Mammary epithelial cell (primary cell): ENCODE measurements at regions of chr2 and their contacts with region 1.

Region 1: DNA sequence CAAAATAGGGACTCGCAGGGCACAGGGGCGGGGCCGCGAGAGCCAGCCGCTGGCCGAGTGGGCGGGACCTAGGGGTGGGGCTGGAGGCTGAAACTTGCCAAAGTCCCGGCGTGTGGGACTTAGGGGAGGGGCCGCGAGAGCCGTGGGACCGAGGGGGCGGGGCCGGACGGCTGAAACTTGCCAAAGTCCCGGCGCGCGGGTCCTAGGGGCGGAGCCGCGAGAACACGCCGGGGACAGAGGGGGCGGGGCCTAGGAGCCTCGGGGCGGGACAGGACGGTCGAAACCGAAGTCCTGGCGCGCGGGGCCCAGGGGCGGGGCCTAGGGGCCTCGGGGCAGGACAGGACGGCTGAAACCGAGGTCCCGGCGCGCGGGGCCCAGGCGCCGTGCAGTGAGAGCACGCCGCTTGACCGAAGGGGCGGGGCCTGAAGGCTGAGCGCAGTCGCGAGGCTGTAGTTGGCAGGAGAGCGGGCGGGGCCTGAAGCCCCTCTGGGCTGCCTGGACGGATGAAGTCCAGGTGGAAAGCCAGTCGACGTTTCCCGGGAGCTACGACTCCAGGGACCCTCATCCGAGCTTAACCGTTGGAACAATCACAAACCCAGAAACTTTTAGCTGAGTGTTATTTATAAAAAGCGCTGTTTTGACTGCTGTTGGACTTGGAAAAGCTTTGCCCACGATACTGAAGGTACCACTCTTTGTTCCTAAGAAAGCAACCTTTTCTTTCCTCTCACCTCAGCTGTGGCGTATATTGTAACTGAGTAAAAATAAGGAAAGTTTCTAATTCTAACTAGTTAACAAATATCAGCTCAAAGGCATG is 475 bp upstream of the BARD1 start:
- DNase-seq: peak; percentile 98
- H3K4me3 ChIP-seq: peak overlapping the region; percentile 81 to 99 (median 92)
- H3K27ac ChIP-seq: peak overlapping the region; percentile 87
- H3K4me1 ChIP-seq: peaks cover 24% of the 10 kb centered on the region
- H3K27me3 ChIP-seq: no peaks in the 10 kb centered on the region
- CTCF ChIP-seq: no peak

Region 2: GRCh38 chr2:214543386-214543965 is 266.5 kb before region 1 on chr2:
- CTCF ChIA-PET with region 1: no interaction called
- dilution Hi-C with region 1: no loop called
- in situ Hi-C with region 1: no loop called
- intact Hi-C with region 1: loop called (anchors 10 kb)
- DNase-seq: peak; percentile 69
- H3K4me3 ChIP-seq: no peak overlapping the region
- H3K27ac ChIP-seq: peak overlapping the region; percentile 72
- H3K4me1 ChIP-seq: peaks cover 25% of the 10 kb centered on the region
- H3K27me3 ChIP-seq: no peaks in the 10 kb centered on the region
- CTCF ChIP-seq: no peak

Region 3: GRCh38 chr2:215693193-215693998 is 883.4 kb after region 1 on chr2:
- CTCF ChIA-PET with region 1: no interaction called
- dilution Hi-C with region 1: no loop called
- in situ Hi-C with region 1: no loop called
- intact Hi-C with region 1: no loop called
- DNase-seq: peak; percentile 68
- H3K4me3 ChIP-seq: no peak overlapping the region
- H3K27ac ChIP-seq: peak overlapping the region; percentile 66
- H3K4me1 ChIP-seq: peaks cover 26% of the 10 kb centered on the region
- H3K27me3 ChIP-seq: no peaks in the 10 kb centered on the region
- CTCF ChIP-seq: no peak